A549 (cell line): ENCODE measurements at regions of chr2 and their contacts with region 1.

Region 1: DNA sequence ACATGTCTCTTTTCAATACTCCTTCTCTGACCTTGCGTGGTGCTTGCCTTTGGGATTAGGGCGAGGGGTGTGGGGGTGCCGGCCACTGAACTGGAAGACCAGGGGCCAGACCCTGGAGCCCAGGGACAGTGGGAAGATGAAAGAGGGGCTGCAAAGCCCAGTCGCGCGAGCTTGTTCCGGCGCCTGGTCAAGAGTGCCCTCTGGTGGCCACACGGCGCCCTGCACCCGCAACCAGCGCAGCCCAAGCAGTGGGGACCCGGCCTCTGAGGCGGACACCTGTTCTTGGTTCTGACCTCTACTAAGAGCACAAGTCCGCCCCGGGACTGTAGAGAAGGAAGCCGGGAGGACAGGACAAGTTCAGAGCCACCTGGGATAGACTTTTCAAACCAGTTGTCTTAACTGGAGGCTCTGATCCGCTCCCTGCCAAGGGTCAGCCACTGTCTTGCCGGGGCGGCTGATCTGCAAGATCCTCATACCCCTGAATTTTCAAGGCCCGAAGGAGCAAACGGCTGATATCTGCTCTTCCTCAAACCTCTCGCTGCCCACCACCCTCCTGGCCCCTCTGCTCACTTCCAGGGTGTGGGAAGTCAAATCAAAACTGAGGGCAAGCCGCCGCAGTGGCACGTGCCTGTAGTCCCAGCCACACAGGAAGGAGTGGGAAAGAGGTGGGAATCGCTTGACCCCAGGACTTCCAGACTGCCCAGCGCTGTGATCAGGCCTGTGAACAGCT is 14.9 kb upstream of the MSH6 start:
- DNase-seq: peak; percentile 55 to 67
- ATAC-seq: peak; percentile 87 to 94
- H3K4me3 ChIP-seq: no peak overlapping the region
- H3K27ac ChIP-seq: peak overlapping the region in 1 of 2 experiments; percentile 58; a peak in 2 of 6 replicates
- H3K4me1 ChIP-seq: no peaks in the 10 kb centered on the region
- CTCF ChIP-seq: peak; percentile 98
- EP300 ChIP-seq: no peak
- POLR2A ChIP-seq: no peak
- RAD21 ChIP-seq: peak; percentile 96 to 99

Region 2: GRCh38 chr2:47339745-47340541 is 428.1 kb before region 1 on chr2:
- CTCF ChIA-PET with region 1: interaction called, 87 read pairs
- POLR2A ChIA-PET with region 1: no interaction called
- DNase-seq: peak in 1 of 2 experiments; percentile 59
- ATAC-seq: peak; percentile 15 to 54; a peak in 5 of 6 replicates
- H3K4me3 ChIP-seq: no peak overlapping the region
- H3K27ac ChIP-seq: peak overlapping the region; percentile 12 to 74; a peak in 4 of 6 replicates
- H3K4me1 ChIP-seq: peaks cover 27% of the 10 kb centered on the region
- CTCF ChIP-seq: no peak
- EP300 ChIP-seq: no peak
- POLR2A ChIP-seq: no peak
- RAD21 ChIP-seq: no peak

Region 3: DNA sequence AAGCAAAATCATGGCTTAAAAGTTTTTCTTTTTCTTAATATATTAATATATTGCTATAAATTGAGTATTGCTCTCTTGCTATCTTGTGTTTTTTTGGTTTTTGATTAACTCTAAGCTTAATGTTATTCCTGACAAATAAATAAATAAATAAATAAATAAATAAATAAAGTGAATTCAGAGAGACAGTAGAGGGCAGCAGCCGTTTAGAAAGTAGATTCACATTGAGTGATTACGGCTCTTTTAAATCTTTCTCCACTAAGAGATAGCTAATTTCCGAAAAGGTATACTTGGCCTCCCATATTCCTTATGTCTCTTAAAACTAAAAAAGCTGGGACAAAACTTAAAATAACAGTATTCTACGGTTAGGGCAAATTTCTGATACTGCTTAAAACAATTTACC is 330.8 kb before region 1 on chr2:
- CTCF ChIA-PET with region 1: interaction called, 170 read pairs
- POLR2A ChIA-PET with region 1: interaction called, 8 read pairs
- DNase-seq: peak; percentile 40 to 51
- ATAC-seq: peak; percentile 58 to 68; a peak in 4 of 6 replicates
- H3K4me3 ChIP-seq: no peak overlapping the region
- H3K27ac ChIP-seq: no peak overlapping the region
- H3K4me1 ChIP-seq: no peaks in the 10 kb centered on the region
- CTCF ChIP-seq: peak; percentile 83
- EP300 ChIP-seq: no peak
- POLR2A ChIP-seq: no peak
- RAD21 ChIP-seq: peak; percentile 64 to 86

Region 4: DNA sequence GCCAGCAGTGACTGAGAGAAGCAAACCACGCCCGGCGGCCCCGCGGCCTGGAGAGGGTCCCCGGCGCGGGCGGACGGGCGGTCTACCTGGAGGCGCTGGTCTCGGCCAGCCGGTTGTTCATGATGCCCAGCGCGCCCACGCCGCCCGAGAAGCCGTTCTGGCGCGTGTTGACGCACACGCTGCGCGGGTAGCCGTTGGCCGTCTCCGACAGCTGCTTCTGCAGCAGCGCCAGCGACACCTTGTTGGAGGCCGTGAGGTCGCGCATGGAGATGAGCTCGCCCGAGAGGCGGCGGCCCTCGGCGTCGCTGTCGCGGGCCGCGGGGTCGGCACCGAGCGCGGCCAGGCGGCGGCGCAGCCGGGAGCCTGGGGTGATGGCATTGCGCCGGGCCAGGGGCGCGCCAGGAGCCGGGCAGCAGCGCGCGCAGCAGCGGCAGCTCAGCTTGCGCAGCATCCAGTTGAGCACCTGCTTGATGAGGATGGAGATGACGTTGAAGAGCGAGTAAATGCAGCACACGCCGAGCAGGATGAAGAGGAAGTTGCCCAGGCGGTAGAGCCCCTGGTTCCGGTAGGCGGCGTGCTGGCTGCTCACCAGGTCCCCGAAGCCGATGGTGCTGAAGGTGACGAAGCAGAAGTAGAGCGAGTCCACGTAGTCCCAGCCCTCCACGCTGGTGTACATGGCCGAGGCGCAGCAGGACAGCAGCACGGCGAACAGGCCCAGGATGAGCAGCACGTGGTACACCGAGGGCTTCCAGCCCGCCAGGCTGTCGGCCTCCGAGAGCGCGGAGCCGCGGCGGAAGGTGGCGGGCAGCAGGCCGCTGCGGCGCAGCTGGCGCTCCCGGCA is 247.0 kb before region 1 on chr2:
- CTCF ChIA-PET with region 1: interaction called, 24 read pairs
- POLR2A ChIA-PET with region 1: no interaction called
- DNase-seq: peak; percentile 69 to 83
- ATAC-seq: peak; percentile 83 to 86
- H3K4me3 ChIP-seq: peak overlapping the region; percentile 54
- H3K27ac ChIP-seq: peak overlapping the region; percentile 43 to 79; a peak in 5 of 6 replicates
- H3K4me1 ChIP-seq: peaks cover 9% of the 10 kb centered on the region
- CTCF ChIP-seq: peak; percentile 62
- EP300 ChIP-seq: no peak
- POLR2A ChIP-seq: peak; percentile 16; the same call in 1 of the 2 replicates
- RAD21 ChIP-seq: peak; percentile 42 to 58; a peak in 4 of 5 replicates

Region 5: DNA sequence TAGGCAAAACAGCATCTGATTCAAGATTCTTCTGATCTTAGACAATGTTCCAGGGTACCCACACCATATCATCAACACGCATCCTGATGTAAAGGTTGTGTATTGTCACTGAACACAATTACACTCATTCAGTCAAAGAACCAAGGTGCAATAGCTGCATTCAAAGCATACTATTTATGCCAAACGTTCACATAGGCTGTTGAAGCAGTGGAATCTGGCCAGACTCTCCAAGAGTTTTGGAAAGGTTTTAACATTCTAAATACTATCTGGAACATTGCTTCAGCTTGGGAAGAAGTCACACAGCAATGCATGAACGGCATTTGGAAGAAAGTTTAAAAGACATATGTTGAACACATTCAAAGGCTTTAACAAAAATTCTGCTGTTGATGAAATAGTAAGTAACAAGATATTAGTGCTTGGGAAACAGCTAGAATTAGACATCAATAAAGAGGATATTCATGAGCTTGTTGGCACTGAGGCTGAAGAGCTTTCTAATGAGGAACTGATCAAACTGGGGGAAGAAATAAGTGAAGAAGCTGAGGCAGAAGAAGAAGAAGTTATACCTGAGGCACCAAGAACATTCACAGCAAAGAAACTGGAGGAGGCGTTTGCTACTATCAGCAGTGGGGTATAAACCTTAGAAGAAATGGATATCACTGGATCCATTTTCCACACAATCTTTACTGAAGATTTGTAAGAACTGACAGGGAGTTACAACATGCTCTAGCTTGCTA is 32.7 kb before region 1 on chr2:
- CTCF ChIA-PET with region 1: interaction called, 10 read pairs
- POLR2A ChIA-PET with region 1: no interaction called
- DNase-seq: no peak
- ATAC-seq: no peak
- H3K4me3 ChIP-seq: no peak overlapping the region
- H3K27ac ChIP-seq: no peak overlapping the region
- H3K4me1 ChIP-seq: no peaks in the 10 kb centered on the region
- CTCF ChIP-seq: no peak
- EP300 ChIP-seq: no peak
- POLR2A ChIP-seq: no peak
- RAD21 ChIP-seq: no peak

Region 6: GRCh38 chr2:47782671-47783485 is 14.8 kb after region 1 on chr2 and contains the start of gene MSH6:
- CTCF ChIA-PET with region 1: interaction called, 87 read pairs
- POLR2A ChIA-PET with region 1: interaction called, 12 read pairs
- DNase-seq: peak; percentile 93 to 95
- ATAC-seq: peak; percentile 83 to 89
- H3K4me3 ChIP-seq: peak within 1 kb of the TSS; percentile 81
- H3K27ac ChIP-seq: peak within 1 kb of the TSS; percentile 89 to 91
- H3K4me1 ChIP-seq: peaks cover 15% of the 10 kb centered on the region; the same call in 2 of the 3 replicates
- CTCF ChIP-seq: no peak
- EP300 ChIP-seq: no peak
- POLR2A ChIP-seq: peak; percentile 63
- RAD21 ChIP-seq: no peak
- polyA plus RNA-seq, gene MSH6: 85.5 and 108 TPM in 2 replicates